SK-N-SH (cell line): ENCODE measurements at regions of chr18 and their contacts with region 1.

Region 1: DNA sequence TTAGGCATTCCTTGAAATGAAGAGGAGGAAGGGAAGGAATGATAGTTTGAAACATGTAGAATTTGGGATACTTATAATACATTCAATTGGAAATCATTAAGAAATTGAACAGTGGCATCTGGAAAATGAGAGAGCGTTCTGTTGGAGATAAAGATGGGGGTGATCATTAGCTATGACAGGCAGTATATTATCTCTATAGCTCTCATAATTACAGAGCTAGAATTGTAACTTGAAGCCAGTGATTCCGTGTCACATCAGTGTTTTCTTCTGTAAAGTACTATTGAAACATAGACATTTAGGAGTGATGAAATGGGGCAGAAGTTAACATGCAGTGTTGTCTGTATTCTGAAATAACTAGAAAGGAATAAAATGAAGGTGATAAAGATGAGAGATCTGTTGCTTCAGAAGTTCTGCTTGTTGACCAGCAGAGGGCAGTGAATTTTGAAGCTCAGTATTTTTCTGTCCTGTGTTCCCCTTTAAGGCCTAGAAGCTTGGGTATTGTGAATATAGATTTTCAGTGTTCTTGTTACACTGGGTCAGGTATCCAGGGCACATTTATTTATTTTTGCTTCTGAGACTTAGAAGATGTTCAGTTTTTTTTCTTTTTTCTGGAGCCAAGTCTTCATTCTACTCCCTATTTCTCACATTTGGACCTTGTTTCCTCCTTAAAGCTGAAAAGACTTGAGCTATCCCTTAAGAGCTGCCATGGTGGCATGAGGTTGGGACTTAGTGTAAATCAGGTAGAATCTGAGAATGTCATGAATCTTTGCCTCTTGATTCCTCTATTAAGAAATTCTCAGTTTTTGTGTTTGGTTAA is 157.4 kb downstream of the TAF4B start:
- DNase-seq: peak; percentile 40
- H3K4me3 ChIP-seq: no peak overlapping the region
- H3K27ac ChIP-seq: no peak overlapping the region; a peak in 1 of 4 replicates
- H3K4me1 ChIP-seq: peaks cover 0 to 5% of the 10 kb centered on the region in 2 experiments; a peak in 2 of 4 replicates
- H3K27me3 ChIP-seq: no peaks in the 10 kb centered on the region
- CTCF ChIP-seq: peak; percentile 88
- EP300 ChIP-seq: no peak
- RAD21 ChIP-seq: peak; percentile 80

Region 2: GRCh38 chr18:26040051-26040656 is 343.5 kb before region 1 on chr18:
- CTCF ChIA-PET with region 1: no interaction called
- POLR2A ChIA-PET with region 1: no interaction called
- DNase-seq: no peak
- H3K4me3 ChIP-seq: no peak overlapping the region
- H3K27ac ChIP-seq: no peak overlapping the region
- H3K4me1 ChIP-seq: no peaks in the 10 kb centered on the region; a peak in 1 of 4 replicates
- H3K27me3 ChIP-seq: no peaks in the 10 kb centered on the region
- CTCF ChIP-seq: no peak
- EP300 ChIP-seq: no peak
- RAD21 ChIP-seq: no peak

Region 3: DNA sequence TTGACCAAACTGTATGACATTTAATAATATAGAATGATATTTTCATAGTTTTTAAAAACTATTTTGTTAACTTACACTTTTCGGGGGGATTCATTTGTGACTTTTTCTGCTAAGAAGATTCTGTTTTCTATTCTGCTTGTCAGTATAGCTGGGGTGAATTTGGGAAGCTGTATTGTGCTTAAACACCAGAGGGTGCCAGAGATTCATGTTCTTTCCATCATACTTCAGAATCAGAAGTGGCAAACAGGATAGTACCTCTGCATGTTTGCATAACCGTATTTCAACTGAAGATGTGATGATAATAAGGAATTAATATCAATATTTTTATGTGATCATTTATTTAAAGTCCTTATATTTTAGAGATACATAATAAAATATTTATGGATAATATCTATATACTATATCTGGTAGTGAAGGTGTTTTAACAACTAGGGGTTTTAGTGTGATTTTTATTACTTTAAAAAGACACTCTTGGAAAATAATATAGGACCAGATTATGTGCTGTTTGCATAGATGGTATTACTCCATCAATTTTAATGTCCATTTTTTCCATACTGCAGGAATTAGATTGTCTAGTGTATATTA is 76.4 kb before region 1 on chr18:
- CTCF ChIA-PET with region 1: interaction called, 13 read pairs
- POLR2A ChIA-PET with region 1: no interaction called
- DNase-seq: peak; percentile 54
- H3K4me3 ChIP-seq: no peak overlapping the region; a peak in 1 of 4 replicates
- H3K27ac ChIP-seq: no peak overlapping the region
- H3K4me1 ChIP-seq: peaks cover 0 to 2% of the 10 kb centered on the region in 2 experiments; a peak in 1 of 4 replicates
- H3K27me3 ChIP-seq: no peaks in the 10 kb centered on the region
- CTCF ChIP-seq: peak; percentile 83
- EP300 ChIP-seq: no peak
- RAD21 ChIP-seq: peak; percentile 92

Region 4: GRCh38 chr18:26370037-26370436 is 13.6 kb before region 1 on chr18:
- CTCF ChIA-PET with region 1: interaction called, 19 read pairs
- POLR2A ChIA-PET with region 1: no interaction called
- DNase-seq: no peak
- H3K4me3 ChIP-seq: no peak overlapping the region
- H3K27ac ChIP-seq: no peak overlapping the region
- H3K4me1 ChIP-seq: no peaks in the 10 kb centered on the region; a peak in 1 of 4 replicates
- H3K27me3 ChIP-seq: no peaks in the 10 kb centered on the region
- CTCF ChIP-seq: no peak
- EP300 ChIP-seq: no peak
- RAD21 ChIP-seq: no peak

Region 5: GRCh38 chr18:26394047-26394654 is 10.5 kb after region 1 on chr18:
- CTCF ChIA-PET with region 1: interaction called, 16 read pairs
- POLR2A ChIA-PET with region 1: no interaction called
- DNase-seq: no peak
- H3K4me3 ChIP-seq: no peak overlapping the region
- H3K27ac ChIP-seq: no peak overlapping the region
- H3K4me1 ChIP-seq: no peaks in the 10 kb centered on the region; a peak in 1 of 4 replicates
- H3K27me3 ChIP-seq: no peaks in the 10 kb centered on the region
- CTCF ChIP-seq: no peak
- EP300 ChIP-seq: no peak
- RAD21 ChIP-seq: no peak

Region 6: DNA sequence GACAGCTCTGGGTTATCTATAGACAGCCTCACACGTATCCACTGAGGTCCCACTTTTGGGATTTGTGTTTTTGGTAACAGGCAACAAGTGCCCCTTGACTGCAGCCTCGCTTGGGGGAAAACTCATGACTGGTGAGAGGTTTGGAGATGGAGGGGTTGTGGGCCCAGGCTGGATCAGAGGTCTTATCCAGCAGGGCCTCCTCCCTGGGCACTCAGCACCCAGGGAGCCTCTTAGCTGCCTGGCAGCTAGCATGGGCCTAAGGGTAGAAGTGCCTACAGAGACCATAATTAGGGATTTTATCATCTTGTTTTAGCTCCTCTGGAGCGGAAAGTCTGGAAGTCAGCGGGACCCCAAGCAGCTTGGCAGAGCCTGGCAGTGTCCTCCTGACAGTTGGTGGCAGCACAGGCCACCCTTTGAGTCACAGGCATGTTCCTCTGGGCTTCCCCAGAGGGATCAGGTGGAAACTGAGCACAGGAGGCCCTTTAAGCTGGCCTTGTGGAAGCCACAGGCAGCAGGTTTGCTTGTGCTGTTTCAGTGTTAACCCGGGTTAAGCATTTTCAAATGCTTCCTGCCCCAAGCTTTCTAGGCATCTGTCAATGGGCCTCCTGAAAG is 21.6 kb after region 1 on chr18:
- CTCF ChIA-PET with region 1: interaction called, 17 read pairs
- POLR2A ChIA-PET with region 1: no interaction called
- DNase-seq: peak; percentile 62
- H3K4me3 ChIP-seq: no peak overlapping the region
- H3K27ac ChIP-seq: no peak overlapping the region
- H3K4me1 ChIP-seq: peaks cover 0 to 2% of the 10 kb centered on the region in 2 experiments; a peak in 1 of 4 replicates
- H3K27me3 ChIP-seq: no peaks in the 10 kb centered on the region
- CTCF ChIP-seq: peak; percentile 70
- EP300 ChIP-seq: no peak
- RAD21 ChIP-seq: peak; percentile 83

Region 7: DNA sequence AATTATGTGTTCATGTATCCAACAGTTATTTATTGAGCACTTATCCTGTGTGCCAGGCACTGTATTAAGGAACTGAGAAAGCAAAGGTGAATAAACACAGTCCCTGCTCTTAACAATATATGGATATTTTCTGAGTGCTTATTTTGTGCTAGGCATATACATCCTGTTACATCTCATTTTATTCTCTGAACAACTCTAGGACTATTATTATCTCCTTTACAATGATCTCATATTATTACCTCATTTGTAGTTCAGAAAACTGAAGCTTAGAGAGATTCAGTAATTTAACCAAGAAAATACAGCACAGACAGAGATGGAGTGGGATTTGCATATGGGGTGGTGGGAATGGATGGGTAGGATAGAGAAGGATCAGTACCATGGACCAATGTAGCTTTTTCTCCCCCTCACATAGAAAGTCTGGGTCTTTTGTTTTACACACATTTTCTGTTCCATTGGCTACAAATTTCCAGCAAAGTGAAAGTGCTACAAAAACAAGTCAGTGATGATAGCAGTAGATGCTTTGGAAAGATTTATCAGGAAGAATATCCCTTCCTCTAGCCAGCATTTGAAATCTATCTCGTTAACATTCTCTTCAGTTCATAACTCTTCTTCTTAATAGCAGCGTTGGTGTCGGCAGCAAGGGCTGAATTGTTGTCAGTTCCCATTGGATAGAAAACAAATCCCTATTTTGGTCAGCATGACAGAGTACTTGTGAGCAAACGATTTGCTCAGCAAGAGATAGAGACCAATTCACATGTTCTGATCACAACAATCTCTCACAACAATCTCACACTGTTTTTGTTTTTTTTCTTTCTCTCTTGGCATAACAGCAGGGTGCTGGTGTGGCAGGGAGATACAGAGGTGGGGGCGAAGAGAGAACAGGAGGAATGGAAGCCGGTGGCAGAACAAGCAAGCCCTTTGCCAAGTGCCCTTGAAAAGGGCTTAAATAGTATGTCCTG is 266.9 kb after region 1 on chr18:
- CTCF ChIA-PET with region 1: interaction called, 17 read pairs
- POLR2A ChIA-PET with region 1: no interaction called
- DNase-seq: no peak
- H3K4me3 ChIP-seq: no peak overlapping the region
- H3K27ac ChIP-seq: peak overlapping the region in 1 of 2 experiments; percentile 89; a peak in 2 of 4 replicates
- H3K4me1 ChIP-seq: peaks cover 0 to 28% of the 10 kb centered on the region in 2 experiments; a peak in 2 of 4 replicates
- H3K27me3 ChIP-seq: no peaks in the 10 kb centered on the region
- CTCF ChIP-seq: no peak
- EP300 ChIP-seq: no peak
- RAD21 ChIP-seq: no peak